ENCODE measurements at regions of chr1 and their contacts with region 1.

Region 1: DNA sequence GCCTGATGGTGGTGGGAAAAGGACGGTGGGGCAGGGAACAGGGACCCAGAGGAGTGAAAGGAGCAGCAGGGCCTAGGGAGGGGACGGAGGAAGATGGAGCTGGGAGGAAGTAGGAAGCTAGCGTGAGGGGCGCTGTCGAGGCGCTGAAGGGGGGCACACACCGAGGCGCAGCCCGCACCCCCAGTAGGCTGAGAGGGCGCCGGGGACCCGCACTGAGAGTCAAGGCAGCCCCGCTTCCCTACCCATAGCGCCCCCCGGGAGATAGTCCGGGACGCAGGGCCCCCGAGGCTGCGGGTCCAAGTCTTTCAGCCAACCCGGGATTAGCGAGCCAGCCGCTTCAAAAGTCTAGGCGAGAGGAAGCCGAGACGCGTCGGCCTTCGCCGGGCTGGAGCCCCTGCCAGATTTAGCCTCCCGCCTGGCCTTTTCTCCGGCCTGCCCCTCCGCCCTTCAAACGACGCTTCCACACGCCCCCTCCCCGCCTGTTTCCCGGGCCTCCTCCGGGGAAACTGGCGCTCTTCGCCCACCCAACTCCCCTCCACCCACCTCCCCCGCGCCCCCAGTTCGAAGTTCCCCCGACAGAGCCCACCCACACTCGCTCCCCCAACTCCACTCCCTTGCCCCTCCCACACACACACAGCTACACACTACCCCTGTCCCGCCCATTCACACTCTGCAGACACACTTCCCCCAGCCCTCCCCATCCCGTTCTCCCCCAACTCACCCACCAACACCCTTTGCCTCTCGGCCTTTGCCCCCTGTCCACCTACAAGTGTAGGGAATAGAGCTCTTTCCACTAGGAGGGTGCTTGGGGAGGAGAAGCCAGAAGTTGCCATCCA is 7.8 kb upstream of the PROX1 start:
- DNase-seq: no peak
- ATAC-seq: no peak

Region 2: DNA sequence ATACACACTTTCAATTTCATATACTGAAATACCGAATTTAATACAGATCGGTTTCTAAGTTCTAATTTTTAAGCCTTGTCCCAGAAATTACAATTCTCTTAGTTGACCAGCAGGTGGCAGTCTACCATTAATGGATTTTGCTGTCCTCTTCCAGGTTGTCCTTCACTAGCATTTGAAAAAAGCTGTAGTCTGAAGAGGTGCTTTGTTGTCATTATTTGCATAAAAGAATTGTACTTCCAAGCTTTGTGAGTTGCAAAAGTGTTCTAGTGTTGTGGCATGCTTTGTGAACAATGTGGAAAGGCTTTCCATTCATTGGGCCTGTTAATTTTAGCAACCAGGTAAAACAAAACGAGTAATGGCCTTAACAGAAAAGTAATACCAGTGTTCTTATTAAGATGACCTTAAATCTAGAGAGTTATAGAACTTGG is 735.3 kb before region 1 on chr1:
- intact Hi-C with region 1: loop called in 1 of 2 experiments (anchors 10 kb)
- DNase-seq: no peak
- ATAC-seq: no peak

Region 3: DNA sequence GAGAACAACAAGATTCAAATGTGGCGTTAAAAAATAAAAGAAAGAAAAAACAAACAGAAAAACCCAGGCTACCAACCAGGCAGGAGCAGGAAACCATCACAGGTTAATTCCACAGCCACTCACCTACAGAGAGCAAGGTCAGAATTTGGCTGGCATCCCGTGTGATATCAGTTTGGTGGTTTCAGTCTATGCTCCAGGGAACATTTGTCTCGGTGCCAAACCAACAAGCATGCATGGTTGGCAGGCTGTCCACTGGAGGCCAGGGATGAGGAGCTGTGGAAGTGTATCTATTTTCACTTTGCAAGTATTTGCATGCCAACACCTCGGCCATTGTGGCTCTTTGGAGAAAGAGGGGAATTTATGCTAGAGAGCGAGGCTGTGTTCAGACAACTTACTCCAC is 45.3 kb before region 1 on chr1:
- intact Hi-C with region 1: loop called in 1 of 2 experiments (anchors 5 kb)
- DNase-seq: peak; percentile 56
- ATAC-seq: peak; percentile 94 to 95